ENCODE measurements at regions of chr1 and their contacts with region 1.

Region 1: GRCh38 chr1:25037174-25038074 is 107.3 kb upstream of the RUNX3 start:
- DNase-seq: peak; percentile 84
- H3K4me3 Mint-ChIP-seq: peak overlapping the region; percentile 13
- H3K27ac Mint-ChIP-seq: peak overlapping the region; percentile 71
- H3K4me1 Mint-ChIP-seq: peaks cover 28% of the 10 kb centered on the region
- H3K27me3 Mint-ChIP-seq: peaks cover 3% of the 10 kb centered on the region

Region 2: DNA sequence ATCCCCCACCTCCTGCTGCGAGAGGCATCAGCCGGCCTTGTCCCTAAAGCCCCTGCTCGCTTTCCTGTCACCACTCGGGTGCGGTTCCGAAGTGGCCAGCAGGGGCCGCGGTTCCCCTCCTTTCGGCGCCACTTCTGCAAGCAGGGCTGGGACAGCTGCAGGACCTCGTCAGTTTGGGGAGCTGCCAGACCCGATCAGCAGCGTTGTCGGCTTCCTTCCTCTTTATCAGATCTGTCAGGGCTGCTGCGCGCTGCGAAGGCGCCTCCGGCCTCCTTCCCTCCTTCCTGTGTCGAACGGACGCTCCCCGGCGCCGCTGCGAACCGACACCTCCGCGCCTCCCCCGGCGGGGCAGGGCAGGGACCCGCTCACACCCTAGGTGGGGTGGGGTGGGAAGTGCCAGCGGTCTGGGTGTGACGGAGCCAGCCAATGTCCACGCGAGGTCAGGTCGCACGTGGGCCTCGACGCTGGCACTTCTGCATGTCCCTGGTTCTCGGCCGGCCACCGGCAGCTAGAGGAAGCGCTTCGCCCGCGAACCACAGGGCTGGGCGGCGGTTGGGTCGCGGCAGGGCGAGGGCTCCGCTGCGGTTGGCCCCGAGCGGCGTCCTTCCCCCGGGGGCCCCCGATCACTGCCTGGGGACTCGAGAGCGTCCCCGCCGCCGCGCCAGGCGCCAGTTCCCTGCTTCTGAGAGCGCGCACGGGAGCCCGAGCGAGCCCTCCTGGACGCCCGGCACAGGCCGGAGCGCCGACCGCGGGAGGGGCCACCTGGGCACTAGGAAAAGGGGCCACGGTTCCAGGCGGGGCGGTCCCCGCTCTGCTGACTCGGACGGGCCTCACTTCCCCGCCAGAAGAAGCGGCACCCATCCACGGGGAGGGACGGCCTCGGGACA is 189.2 kb before region 1 on chr1:
- CTCF ChIA-PET with region 1: interaction called, 64 read pairs
- POLR2A ChIA-PET with region 1: no interaction called
- intact Hi-C with region 1: loop called (anchors 1 kb)
- DNase-seq: peak; percentile 94
- H3K4me3 Mint-ChIP-seq: peak overlapping the region; percentile 65
- H3K27ac Mint-ChIP-seq: no peak overlapping the region
- H3K4me1 Mint-ChIP-seq: peaks cover 14% of the 10 kb centered on the region
- H3K27me3 Mint-ChIP-seq: no peaks in the 10 kb centered on the region

Region 3: DNA sequence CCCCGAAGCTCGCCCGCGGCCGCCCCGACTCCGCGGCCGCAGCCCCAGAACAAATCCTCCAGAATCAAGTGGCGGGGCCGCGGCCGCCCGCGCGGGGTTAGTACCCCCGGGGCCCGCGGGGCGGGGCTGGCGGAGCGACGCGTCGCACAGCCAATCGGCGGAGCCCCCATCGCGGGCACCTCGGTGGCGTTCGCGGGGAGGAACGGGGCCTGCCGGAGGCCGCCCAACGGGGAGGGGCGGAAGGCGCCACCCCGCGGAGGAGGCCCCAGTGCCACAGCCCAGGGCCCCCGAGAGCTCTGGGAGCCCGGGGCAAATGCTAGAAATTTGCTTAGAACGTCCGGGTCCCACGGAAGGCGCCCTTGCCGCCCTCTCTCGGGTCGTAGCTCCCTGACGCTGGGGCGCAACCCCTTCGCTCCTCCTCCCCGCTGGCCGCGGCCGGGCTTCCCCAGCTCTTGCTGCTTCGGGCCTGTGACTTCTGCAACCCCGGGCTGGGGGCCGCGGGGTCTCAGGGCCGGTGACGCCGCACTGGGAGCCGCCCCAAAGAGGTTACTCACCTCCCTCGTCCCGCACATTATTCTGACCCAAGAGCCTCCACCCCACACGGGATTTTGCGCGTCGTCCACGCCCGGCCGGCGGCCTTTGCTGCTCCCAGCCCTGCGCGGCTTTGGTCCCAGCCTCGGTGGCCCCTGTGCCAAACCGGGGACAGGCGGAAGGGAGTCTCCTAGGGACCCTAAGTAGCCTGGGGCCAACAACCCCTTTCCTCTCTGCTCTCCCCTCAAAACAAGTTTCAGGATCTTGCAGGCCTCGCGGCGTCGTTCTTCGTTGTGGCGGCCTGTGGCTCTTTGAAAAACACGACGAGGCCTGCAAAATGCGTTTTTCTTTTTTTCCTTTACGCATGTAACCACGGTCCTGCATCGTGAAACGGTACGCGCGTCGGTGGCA is 106.9 kb before region 1 on chr1 and contains the start of gene RUNX3:
- CTCF ChIA-PET with region 1: interaction called, 290 read pairs
- POLR2A ChIA-PET with region 1: interaction called, 17 read pairs
- intact Hi-C with region 1: loop called (anchors 1 kb)
- DNase-seq: peak; percentile 94
- H3K4me3 Mint-ChIP-seq: peak within 1 kb of the TSS; percentile 81
- H3K27ac Mint-ChIP-seq: peak within 1 kb of the TSS; percentile 91
- H3K4me1 Mint-ChIP-seq: peaks cover 64% of the 10 kb centered on the region
- H3K27me3 Mint-ChIP-seq: no peaks in the 10 kb centered on the region
- total RNA-seq, gene RUNX3: 153 to 155 TPM

Region 4: GRCh38 chr1:24955161-24955560 is 82.3 kb before region 1 on chr1:
- CTCF ChIA-PET with region 1: interaction called, 137 read pairs
- POLR2A ChIA-PET with region 1: no interaction called
- intact Hi-C with region 1: loop called (anchors 1 kb)
- DNase-seq: peak; percentile 90
- H3K4me3 Mint-ChIP-seq: peak overlapping the region; percentile 83
- H3K27ac Mint-ChIP-seq: peak overlapping the region; percentile 89
- H3K4me1 Mint-ChIP-seq: peaks cover 90% of the 10 kb centered on the region
- H3K27me3 Mint-ChIP-seq: no peaks in the 10 kb centered on the region

Region 5: GRCh38 chr1:24990779-24991641 is 46.4 kb before region 1 on chr1:
- CTCF ChIA-PET with region 1: interaction called, 19 read pairs
- POLR2A ChIA-PET with region 1: no interaction called
- intact Hi-C with region 1: no loop called
- DNase-seq: peak; percentile 41
- H3K4me3 Mint-ChIP-seq: no peak overlapping the region
- H3K27ac Mint-ChIP-seq: peak overlapping the region; percentile 94
- H3K4me1 Mint-ChIP-seq: peaks cover 82% of the 10 kb centered on the region
- H3K27me3 Mint-ChIP-seq: no peaks in the 10 kb centered on the region

Region 6: GRCh38 chr1:25099343-25099951 is 62.0 kb after region 1 on chr1:
- CTCF ChIA-PET with region 1: interaction called, 41 read pairs
- POLR2A ChIA-PET with region 1: interaction called, 3 read pairs
- intact Hi-C with region 1: loop called (anchors 1 kb)
- DNase-seq: peak; percentile 59
- H3K4me3 Mint-ChIP-seq: no peak overlapping the region
- H3K27ac Mint-ChIP-seq: no peak overlapping the region
- H3K4me1 Mint-ChIP-seq: peaks cover 50% of the 10 kb centered on the region
- H3K27me3 Mint-ChIP-seq: peaks cover 2% of the 10 kb centered on the region